GM12878 (cell line): ENCODE measurements at regions of chr13 and their contacts with region 1.

Region 1: DNA sequence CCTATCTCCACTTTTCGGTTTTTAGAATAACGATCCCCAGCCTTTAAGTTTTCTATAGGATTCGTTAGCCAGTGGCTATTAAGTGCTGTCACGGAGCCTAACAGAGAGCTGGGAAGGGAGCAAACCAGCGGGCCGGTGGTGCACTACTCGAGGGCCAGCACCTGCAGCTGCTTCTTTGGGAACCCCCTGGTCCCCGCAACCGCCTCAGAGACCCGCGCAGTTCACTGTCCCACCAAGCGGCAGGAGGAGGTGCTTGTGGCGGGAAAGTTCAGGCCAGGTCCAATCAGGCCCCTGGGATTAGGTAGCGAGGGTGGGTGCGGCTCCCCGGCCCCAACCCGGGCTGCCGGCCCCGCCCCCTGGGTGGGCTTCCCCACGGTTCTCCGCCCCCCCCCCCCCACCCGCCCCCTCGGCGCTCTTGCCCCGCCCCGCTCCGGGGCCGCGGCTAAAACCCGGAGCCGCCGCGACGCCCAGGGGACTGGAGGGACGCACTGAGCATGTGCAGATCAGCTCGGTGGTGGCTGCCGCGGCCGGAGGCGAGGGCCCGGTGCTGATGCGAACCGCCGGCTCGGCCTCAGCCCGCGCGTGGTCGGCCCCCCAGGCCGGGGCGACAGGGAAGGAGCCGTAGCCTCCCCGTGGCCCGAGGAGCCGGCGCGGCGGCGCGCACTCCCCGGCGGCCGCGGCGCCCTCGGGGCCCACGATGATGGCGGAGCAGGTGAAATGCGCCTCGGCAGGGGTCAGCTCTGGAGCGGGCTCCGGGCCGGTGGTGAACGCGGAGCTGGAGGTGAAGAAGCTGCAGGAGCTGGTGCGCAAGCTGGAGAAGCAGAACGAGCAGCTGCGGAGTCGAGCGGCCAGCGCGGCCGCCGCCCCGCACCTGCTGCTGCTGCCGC is at the start of gene SLAIN1:
- DNase-seq: no peak
- ATAC-seq: peak; percentile 84
- H3K4me3 ChIP-seq: peak within 1 kb of the TSS; percentile 87
- H3K27ac ChIP-seq: peak within 1 kb of the TSS; percentile 38
- H3K4me1 ChIP-seq: peaks cover 13% of the 10 kb centered on the region; the same call in 1 of the 2 replicates
- H3K27me3 ChIP-seq: no peaks in the 10 kb centered on the region; a peak in 1 of 4 replicates
- CTCF ChIP-seq: no peak
- EP300 ChIP-seq: no peak
- POLR2A ChIP-seq: peak; percentile 87
- RAD21 ChIP-seq: no peak
- polyA plus RNA-seq, gene SLAIN1: 26.8 to 35.1 TPM

Region 2: DNA sequence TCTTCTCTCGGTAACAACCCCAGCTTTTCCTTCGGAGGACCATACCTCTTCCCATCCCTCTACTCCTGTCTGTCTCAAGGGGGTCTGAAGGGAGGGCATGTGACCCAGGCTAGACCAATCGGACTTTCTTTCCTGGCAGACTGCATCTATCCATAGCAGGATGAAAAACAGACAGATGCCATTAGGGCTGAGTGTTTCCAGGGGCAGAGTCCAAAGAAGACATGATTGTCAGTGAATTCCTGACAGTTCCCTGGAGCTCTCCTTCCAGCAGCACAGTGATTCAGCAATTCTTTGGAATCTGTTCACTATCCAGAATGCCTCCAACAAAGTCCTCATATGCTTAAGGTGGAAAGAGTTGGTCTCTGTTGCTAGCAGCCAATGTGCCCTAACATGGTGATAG is 1001.1 kb before region 1 on chr13:
- CTCF ChIA-PET with region 1: no interaction called
- POLR2A ChIA-PET with region 1: no interaction called
- RAD21 ChIA-PET with region 1: no interaction called
- SMC1A ChIA-PET with region 1: no interaction called
- in situ Hi-C with region 1: no loop called
- intact Hi-C with region 1: no loop called
- DNase-seq: no peak
- ATAC-seq: no peak
- H3K4me3 ChIP-seq: no peak overlapping the region
- H3K27ac ChIP-seq: no peak overlapping the region
- H3K4me1 ChIP-seq: no peaks in the 10 kb centered on the region
- H3K27me3 ChIP-seq: no peaks in the 10 kb centered on the region; a peak in 1 of 4 replicates
- CTCF ChIP-seq: no peak
- EP300 ChIP-seq: no peak
- POLR2A ChIP-seq: no peak
- RAD21 ChIP-seq: no peak

Region 3: DNA sequence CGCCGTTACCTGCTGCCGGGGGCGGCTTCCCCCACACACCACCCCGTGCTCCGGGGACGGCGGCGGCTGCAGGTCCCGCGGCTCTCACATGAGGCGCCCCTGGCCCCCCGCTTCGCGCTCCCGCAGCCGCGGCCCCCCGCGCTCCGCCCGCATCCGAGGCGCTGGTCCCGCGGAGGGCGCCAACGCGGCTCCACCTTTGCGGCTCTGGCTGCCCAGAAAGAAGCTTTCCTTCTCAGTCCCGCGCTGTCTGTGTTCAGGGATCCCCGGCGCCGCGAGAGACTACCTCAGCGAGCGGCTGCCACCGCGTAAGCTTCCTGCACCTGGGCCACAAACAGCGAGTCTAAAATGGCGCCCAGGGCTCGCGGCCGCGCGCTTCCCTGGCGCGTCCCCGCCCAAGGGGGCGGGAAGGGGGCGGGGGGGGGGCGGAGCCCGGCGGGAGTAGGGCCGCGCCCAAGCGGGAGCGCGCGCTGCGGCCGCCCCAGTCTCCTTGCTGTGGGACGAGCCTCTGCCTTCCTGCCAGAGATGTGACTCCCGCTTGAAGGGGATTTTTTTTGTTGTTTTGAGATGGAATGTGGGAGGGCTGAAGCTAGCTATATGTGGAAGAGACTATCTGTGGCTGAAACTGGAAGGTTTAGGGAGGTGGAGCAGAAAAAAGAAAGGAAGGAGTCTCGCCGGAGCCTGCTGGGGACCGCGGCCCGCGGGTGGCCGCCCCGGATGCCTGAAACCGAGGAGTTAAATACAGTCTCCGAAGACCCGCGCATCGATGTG is 670.5 kb before region 1 on chr13 and contains the start of gene FBXL3:
- CTCF ChIA-PET with region 1: no interaction called
- POLR2A ChIA-PET with region 1: no interaction called
- RAD21 ChIA-PET with region 1: no interaction called
- SMC1A ChIA-PET with region 1: no interaction called
- in situ Hi-C with region 1: no loop called
- intact Hi-C with region 1: loop called (anchors 10 kb)
- DNase-seq: peak; percentile 35
- ATAC-seq: peak; percentile 63
- H3K4me3 ChIP-seq: peak within 1 kb of the TSS; percentile 93
- H3K27ac ChIP-seq: peak within 1 kb of the TSS; percentile 79
- H3K4me1 ChIP-seq: no peaks in the 10 kb centered on the region
- H3K27me3 ChIP-seq: no peaks in the 10 kb centered on the region
- CTCF ChIP-seq: no peak
- EP300 ChIP-seq: no peak
- POLR2A ChIP-seq: peak; percentile 90
- RAD21 ChIP-seq: no peak
- polyA plus RNA-seq, gene FBXL3: 9.0 to 11.4 TPM

Region 4: DNA sequence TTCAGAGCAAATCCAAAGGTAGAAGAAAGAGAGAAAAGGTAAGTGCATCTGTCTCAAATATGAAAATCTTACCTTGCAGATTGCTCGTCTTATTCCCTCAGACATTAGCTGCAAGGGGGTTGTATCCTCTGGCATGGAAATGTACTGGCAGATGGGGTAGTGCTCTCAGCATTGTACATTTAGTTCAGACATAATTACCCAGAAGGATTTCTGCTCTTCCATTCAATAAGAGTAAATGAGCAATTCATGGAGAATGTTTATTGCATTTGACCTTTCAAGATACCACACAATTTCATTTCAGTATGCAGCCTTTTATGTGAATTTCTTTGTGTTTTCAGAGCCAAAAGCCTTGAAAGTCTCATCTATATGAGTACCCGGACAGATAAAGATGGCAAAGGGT is 98.1 kb before region 1 on chr13:
- CTCF ChIA-PET with region 1: interaction called, 14 read pairs
- POLR2A ChIA-PET with region 1: no interaction called
- RAD21 ChIA-PET with region 1: interaction called, 3 read pairs
- SMC1A ChIA-PET with region 1: interaction called, 20 read pairs
- in situ Hi-C with region 1: no loop called
- intact Hi-C with region 1: no loop called
- DNase-seq: no peak
- ATAC-seq: no peak
- H3K4me3 ChIP-seq: no peak overlapping the region
- H3K27ac ChIP-seq: no peak overlapping the region
- H3K4me1 ChIP-seq: no peaks in the 10 kb centered on the region
- H3K27me3 ChIP-seq: peaks cover 0 to 7% of the 10 kb centered on the region in 2 experiments; a peak in 2 of 4 replicates
- CTCF ChIP-seq: no peak
- EP300 ChIP-seq: no peak
- POLR2A ChIP-seq: no peak
- RAD21 ChIP-seq: no peak

Region 5: DNA sequence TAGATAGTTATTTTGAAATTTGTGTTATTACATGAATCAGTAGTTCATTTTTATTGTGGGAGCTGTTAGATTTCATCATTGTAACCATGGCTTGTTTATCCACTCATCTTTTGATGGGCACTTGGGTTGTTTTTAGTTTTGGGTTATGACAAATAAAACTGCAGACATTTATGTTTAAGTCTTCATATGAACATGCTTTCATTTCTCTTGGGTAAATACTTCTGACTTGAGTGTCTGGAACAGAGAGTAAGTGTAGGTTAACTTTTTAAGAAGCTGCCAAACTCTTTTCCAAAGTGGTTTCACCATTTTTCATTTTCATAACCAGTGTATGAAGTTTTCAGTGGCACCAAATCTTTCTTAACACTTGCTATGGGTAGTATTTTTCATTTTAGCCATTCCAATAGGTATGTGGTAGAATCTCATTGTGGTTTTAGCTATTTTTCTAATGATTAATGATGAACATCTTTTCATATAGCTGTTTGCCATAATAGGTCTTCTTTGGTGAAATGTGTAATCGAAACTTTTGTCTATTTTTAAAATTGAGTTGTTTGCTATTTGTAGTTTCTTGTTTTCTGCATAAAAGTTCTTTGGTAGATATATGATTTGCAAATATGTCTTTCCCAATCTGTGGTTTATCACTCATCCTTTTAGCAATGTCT is 17.9 kb after region 1 on chr13:
- CTCF ChIA-PET with region 1: interaction called, 8 read pairs
- POLR2A ChIA-PET with region 1: interaction called, 9 read pairs
- RAD21 ChIA-PET with region 1: interaction called, 9 read pairs
- SMC1A ChIA-PET with region 1: interaction called, 61 read pairs
- in situ Hi-C with region 1: no loop called
- intact Hi-C with region 1: loop called (anchors 1 kb)
- DNase-seq: no peak
- ATAC-seq: peak; percentile 65
- H3K4me3 ChIP-seq: no peak overlapping the region
- H3K27ac ChIP-seq: peak overlapping the region; percentile 17
- H3K4me1 ChIP-seq: peaks cover 12% of the 10 kb centered on the region
- H3K27me3 ChIP-seq: no peaks in the 10 kb centered on the region
- CTCF ChIP-seq: no peak
- EP300 ChIP-seq: no peak; a peak in 1 of 4 replicates
- POLR2A ChIP-seq: no peak
- RAD21 ChIP-seq: no peak

Region 6: DNA sequence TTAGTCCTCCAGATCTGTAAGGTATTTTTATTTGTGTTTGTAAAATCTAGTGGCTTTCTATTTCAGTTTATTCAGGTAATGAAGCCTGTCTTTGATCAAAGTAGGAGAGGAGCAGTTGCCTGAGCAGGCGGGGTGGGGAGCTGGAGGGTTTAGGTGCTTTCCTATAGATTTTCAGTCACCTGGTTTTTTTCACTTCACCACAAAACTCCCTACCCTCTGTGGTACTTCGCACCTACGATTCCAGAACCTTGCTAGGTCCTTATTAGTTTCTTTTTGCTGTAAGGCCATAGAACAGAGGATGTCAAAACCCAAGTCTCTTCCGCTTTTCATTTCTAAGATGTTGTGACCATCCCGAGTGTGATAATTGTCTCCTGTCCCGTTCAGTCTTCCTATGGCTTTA is 26.6 kb after region 1 on chr13:
- CTCF ChIA-PET with region 1: interaction called, 8 read pairs
- POLR2A ChIA-PET with region 1: interaction called, 9 read pairs
- RAD21 ChIA-PET with region 1: interaction called, 9 read pairs
- SMC1A ChIA-PET with region 1: interaction called, 61 read pairs
- in situ Hi-C with region 1: no loop called
- intact Hi-C with region 1: no loop called
- DNase-seq: peak; percentile 47
- ATAC-seq: peak; percentile 73
- H3K4me3 ChIP-seq: no peak overlapping the region
- H3K27ac ChIP-seq: no peak overlapping the region
- H3K4me1 ChIP-seq: peaks cover 4% of the 10 kb centered on the region; the same call in 1 of the 2 replicates
- H3K27me3 ChIP-seq: no peaks in the 10 kb centered on the region
- CTCF ChIP-seq: no peak
- EP300 ChIP-seq: no peak
- POLR2A ChIP-seq: no peak
- RAD21 ChIP-seq: no peak

Region 7: DNA sequence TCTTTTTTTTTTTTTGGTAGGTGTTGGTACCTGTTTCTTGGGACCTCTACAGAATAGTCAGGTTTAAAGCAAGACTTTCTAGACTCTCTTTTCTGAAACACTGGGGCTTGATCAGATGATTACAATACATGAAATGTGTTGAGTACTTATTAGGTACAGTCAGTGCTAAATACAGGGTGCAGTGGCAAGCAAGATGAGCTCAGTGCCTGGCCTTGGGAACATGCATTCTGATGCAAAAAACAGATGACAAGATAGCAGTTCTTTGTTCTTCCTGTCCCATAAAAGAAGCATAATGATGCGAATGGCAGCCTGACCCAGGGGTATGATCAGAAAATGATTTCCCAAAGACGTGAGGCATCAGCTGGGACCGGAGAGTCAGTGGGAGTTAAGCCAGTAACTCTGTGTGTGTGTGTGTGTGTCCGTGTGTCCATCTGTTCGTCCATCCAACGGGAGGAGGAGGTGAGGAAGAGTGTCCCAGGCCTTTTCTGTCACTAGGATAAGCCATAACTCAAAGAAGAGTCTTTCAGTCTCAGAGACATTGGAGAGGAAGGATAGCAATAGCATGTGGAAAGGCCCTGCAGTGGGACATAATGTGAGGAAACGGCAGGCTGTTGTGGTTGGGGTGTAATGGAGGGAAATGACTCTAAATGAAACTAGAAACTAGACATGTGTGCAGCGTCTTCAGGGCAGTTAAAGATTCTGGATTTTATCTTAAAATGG is 32.2 kb after region 1 on chr13:
- CTCF ChIA-PET with region 1: interaction called, 5 read pairs
- POLR2A ChIA-PET with region 1: interaction called, 8 read pairs
- RAD21 ChIA-PET with region 1: interaction called, 9 read pairs
- SMC1A ChIA-PET with region 1: interaction called, 46 read pairs
- in situ Hi-C with region 1: no loop called
- intact Hi-C with region 1: loop called (anchors 1 kb)
- DNase-seq: peak; percentile 64
- ATAC-seq: peak; percentile 97
- H3K4me3 ChIP-seq: peak overlapping the region; percentile 12; the same call in 1 of the 2 replicates
- H3K27ac ChIP-seq: peak overlapping the region; percentile 56
- H3K4me1 ChIP-seq: peaks cover 18% of the 10 kb centered on the region
- H3K27me3 ChIP-seq: no peaks in the 10 kb centered on the region
- CTCF ChIP-seq: no peak
- EP300 ChIP-seq: peak; percentile 78 to 89
- POLR2A ChIP-seq: no peak
- RAD21 ChIP-seq: peak; percentile 7; the same call in 1 of the 2 replicates

Region 8: DNA sequence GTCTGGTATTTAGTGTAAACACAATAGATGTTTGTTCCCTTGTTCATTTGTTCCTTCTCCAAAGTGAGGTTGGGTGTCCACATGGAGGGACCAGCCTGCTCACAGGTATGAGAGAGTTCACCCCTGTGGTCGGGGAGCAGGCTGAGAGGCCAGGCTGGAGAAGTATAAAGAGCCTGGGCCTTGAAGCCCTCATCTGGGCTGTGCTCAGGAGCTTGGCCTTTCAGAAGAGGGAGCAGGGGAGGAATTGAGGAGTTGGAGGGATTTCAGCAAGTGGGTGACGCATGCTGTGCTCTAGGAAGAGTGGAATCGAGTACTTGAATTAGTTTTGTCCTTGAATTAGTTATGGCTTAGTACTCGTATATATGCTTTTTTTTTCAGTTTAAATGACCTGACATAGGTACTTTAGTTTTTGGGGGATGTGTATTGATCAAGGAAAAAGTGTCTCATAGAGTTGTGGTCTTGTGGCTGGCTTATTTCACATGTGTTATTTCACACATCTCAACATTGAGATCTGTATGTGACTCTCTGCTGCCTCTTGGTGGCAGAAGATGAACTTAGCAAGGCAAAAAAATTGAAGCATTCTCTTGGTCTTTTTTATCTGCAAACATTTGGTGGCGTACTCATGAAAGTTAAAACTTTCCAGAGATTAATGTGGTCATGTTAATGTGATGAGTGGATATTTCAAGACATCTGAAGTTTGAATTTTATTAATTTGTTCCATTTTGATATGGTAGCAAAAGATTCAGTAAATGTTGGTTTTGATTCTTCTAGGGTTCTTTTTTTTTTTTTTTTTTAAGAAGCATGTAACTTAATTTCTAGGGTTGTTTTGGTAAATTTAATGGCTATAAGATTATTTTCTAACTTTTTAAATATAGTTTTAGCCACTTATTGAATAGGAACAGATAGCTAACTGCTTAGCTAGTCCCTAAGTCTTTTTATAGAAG is 54.3 kb after region 1 on chr13:
- CTCF ChIA-PET with region 1: interaction called, 12 read pairs
- POLR2A ChIA-PET with region 1: no interaction called
- RAD21 ChIA-PET with region 1: interaction called, 6 read pairs
- SMC1A ChIA-PET with region 1: interaction called, 18 read pairs
- in situ Hi-C with region 1: no loop called
- intact Hi-C with region 1: loop called (anchors 2 kb)
- DNase-seq: peak; percentile 34
- ATAC-seq: peak; percentile 91
- H3K4me3 ChIP-seq: no peak overlapping the region
- H3K27ac ChIP-seq: no peak overlapping the region
- H3K4me1 ChIP-seq: no peaks in the 10 kb centered on the region
- H3K27me3 ChIP-seq: no peaks in the 10 kb centered on the region
- CTCF ChIP-seq: peak; percentile 77 to 90 (median 81)
- EP300 ChIP-seq: no peak
- POLR2A ChIP-seq: no peak
- RAD21 ChIP-seq: peak; percentile 94